Mammary epithelial cell (primary cell): ENCODE measurements at regions of chr9 and their contacts with region 1.

Region 1: GRCh38 chr9:100216178-100216787 is 117.2 kb downstream of the INVS start:
- DNase-seq: peak; percentile 43
- H3K4me3 ChIP-seq: no peak overlapping the region
- H3K27ac ChIP-seq: no peak overlapping the region
- H3K4me1 ChIP-seq: no peaks in the 10 kb centered on the region
- H3K27me3 ChIP-seq: no peaks in the 10 kb centered on the region
- CTCF ChIP-seq: peak; percentile 85 to 87

Region 2: GRCh38 chr9:99266255-99267023 is 949.8 kb before region 1 on chr9:
- CTCF ChIA-PET with region 1: no interaction called
- dilution Hi-C with region 1: no loop called
- in situ Hi-C with region 1: no loop called
- intact Hi-C with region 1: loop called (anchors 5 kb)
- DNase-seq: peak; percentile 44
- H3K4me3 ChIP-seq: no peak overlapping the region
- H3K27ac ChIP-seq: no peak overlapping the region
- H3K4me1 ChIP-seq: no peaks in the 10 kb centered on the region
- H3K27me3 ChIP-seq: no peaks in the 10 kb centered on the region
- CTCF ChIP-seq: peak; percentile 71 to 89

Region 3: DNA sequence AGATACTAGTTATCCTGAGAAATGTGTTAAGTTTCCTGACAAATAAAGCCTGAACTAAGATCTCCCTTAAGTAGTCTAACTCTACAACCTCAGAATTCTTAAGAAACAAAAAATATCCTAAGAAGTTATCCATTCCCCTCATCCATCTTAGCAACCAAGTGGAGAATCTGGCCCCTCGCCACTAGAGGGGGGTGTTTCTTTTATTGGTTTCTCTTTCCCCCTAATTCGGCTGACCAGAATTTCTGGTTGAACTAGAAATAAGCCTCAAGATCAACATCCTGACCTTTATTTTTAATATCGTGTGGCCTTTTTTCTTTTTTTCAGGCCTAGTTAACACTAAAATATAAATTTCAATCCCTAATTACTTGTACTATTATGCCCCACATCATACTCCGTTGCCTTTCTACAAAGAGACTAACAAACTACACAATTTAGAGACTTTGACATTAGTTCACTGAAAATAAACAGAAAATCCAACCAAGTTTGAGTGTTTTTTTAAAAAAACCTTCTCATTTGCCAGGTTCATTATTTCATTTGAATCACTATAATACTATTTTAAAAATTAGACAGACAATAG is 408.9 kb before region 1 on chr9:
- CTCF ChIA-PET with region 1: no interaction called
- dilution Hi-C with region 1: no loop called
- in situ Hi-C with region 1: no loop called
- intact Hi-C with region 1: loop called (anchors 5 kb)
- DNase-seq: peak; percentile 63
- H3K4me3 ChIP-seq: no peak overlapping the region
- H3K27ac ChIP-seq: no peak overlapping the region
- H3K4me1 ChIP-seq: peaks cover 4% of the 10 kb centered on the region
- H3K27me3 ChIP-seq: no peaks in the 10 kb centered on the region
- CTCF ChIP-seq: peak; percentile 71 to 78

Region 4: GRCh38 chr9:100028201-100028784 is 188.0 kb before region 1 on chr9:
- CTCF ChIA-PET with region 1: no interaction called
- dilution Hi-C with region 1: no loop called
- in situ Hi-C with region 1: loop called (anchors 10 to 25 kb)
- intact Hi-C with region 1: loop called (anchors 1 kb)
- DNase-seq: peak; percentile 53
- H3K4me3 ChIP-seq: no peak overlapping the region
- H3K27ac ChIP-seq: no peak overlapping the region
- H3K4me1 ChIP-seq: no peaks in the 10 kb centered on the region
- H3K27me3 ChIP-seq: no peaks in the 10 kb centered on the region
- CTCF ChIP-seq: peak; percentile 95 to 97

Region 5: DNA sequence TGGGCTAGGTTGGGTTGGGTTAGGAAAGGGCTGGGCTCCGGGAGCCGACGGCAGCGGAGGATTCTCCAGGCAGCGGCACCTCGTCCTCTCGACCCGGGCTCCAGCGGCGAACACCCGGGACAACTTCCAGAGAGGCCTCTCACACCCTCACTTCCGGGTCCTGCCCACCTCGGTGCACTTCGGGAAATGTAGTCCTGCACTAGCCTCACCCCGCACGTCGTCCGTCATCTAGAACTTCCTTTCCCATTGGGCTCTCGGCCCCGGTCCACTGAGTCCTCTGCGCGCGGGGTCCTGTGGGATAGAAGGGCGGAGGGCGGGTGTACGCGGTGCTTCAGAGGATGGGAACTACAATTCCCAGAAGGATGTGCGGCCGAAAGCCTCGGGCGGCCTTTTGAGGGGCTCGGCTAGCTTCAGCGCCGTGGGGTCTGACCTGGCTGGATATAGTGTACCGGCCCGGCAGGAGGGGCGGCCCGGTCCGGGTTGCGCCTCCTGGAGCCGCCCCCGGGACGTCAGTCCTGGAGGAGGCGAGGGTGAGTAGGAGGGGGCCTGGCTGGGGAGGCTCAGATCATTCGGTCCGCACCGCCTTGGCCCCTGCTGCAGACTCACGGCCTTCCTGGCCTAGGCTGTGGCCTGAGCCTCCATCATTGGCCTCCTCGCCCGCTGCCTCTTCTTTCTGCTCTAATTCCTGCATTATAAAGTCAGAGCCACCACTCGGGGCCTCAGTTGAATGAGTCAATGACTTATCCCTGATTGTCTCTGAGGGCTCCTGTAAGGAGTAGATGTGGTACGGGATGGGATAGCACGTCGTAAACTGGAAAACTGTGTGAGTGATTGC is 117.2 kb before region 1 on chr9 and contains the starts of genes ERP44 and INVS:
- CTCF ChIA-PET with region 1: no interaction called
- dilution Hi-C with region 1: no loop called
- in situ Hi-C with region 1: no loop called
- intact Hi-C with region 1: loop called (anchors 2 kb)
- DNase-seq: peak; percentile 99
- H3K4me3 ChIP-seq: peak within 1 kb of the TSS; percentile 77 to 95 (median 86)
- H3K27ac ChIP-seq: peak within 1 kb of the TSS; percentile 68
- H3K4me1 ChIP-seq: peaks cover 8% of the 10 kb centered on the region
- H3K27me3 ChIP-seq: no peaks in the 10 kb centered on the region
- CTCF ChIP-seq: no peak
- total RNA-seq, gene ERP44: 11.0 to 16.9 TPM
- total RNA-seq, gene INVS: 21.0 to 22.8 TPM